Gastrocnemius medialis (tissue), 4 donors: ENCODE measurements at regions of chr18 and their contacts with region 1.

Region 1: DNA sequence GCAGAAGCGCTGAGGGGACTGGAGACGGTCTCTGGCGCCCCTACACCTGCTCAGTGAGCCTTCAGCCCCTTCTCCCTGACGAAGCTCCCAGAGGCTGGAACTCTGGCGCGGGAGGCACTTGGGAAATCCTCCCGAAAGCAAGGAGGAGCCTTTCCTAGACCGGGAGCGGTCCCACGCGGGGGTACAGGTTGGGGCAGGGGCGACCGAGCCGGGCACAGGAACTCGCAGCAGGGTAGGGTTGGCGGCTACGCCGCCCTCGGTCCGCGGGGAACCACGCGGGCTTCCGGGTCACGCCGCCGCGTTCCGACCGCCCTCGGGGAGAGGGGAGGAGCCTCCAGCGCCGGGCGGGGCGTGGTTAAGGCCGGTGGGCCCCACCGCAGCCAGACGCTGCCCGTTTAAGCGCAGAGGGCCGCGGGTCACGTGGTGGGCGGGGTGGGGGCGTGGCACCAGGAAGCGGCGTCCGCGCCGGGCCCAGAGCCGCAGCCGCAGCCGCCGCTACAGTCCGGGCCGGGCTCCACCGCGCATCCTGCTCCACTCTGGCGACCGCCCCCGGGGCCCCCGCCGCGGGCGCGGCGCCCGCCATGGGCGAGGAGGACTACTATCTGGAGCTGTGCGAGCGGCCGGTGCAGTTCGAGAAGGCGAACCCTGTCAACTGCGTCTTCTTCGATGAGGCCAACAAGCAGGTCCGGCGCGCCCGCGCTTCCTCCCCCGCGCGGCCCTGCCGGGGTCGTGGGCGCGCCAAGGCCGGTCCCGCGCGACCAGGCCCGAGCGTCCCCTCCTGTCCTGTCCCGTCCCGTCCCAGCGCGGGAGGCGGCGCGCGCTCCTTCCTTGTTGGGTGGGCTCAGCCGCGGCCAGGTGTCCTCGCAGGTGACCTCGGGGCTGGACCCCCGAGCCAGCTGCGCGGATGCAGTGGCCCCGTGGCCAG is at the start of gene RMC1:
- DNase-seq: peak; percentile 93 to 94
- ATAC-seq: peak; percentile 94
- H3K4me3 ChIP-seq: peak within 1 kb of the TSS; percentile 77 to 89 (median 82)
- H3K27ac ChIP-seq: peak within 1 kb of the TSS; percentile 91 to 94 (median 92)
- H3K4me1 ChIP-seq: peaks cover 16 to 22% of the 10 kb centered on the region in 2 donors
- H3K27me3 ChIP-seq: no peaks in the 10 kb centered on the region
- CTCF ChIP-seq: peak in 3 of 5 experiments; percentile 6 to 38 (median 29)
- POLR2A ChIP-seq: peak; percentile 74 to 81
- total RNA-seq, gene RMC1: 20.1 to 27.3 (median 25.2) TPM

Region 2: DNA sequence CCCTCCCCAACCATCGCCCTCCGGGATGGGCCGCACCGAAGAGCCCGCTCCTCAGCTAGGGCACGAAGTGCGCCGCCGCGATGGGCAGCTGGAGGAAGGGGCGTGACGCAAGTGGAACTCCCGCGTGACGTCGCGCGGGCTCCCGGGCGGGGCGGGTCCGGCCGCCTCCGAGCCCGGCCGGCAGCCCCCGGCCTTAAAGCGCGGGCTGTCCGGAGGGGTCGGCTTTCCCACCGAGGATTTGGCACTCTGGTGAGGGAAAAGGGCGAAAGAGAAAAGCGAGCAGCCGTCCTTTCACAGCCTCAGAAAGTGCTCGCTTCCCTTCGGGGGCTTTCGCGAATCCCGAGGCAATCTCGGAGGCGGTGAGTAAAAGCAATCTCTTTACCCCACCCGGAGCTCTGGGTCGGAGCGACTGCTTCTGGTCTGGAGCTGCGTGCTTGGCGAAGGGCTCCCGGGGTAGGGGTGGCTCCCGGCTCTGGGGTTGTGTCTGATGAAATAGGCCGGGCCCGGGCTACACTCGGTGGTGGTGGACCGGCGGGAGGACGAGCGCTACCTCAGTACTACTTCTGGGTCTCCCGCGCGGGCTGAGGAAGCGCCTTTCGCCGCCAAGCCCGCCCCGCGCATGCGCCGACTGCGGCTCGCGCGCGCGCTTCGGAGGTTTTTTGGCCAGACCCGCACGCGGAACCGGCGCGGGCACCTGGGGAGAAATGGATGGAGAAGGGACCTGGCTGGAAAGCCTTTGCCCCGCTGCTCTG is 569.9 kb before region 1 on chr18 and contains the start of gene RBBP8:
- in situ Hi-C with region 1: no loop called
- intact Hi-C with region 1: loop called (anchors 10 kb)
- DNase-seq: peak; percentile 43 to 46
- ATAC-seq: peak; percentile 82 to 88
- H3K4me3 ChIP-seq: peak within 1 kb of the TSS; percentile 56 to 90 (median 74)
- H3K27ac ChIP-seq: peak within 1 kb of the TSS; percentile 79 to 92 (median 86)
- H3K4me1 ChIP-seq: peaks cover 0 to 11% of the 10 kb centered on the region in 2 donors
- H3K27me3 ChIP-seq: no peaks in the 10 kb centered on the region
- CTCF ChIP-seq: no peak
- POLR2A ChIP-seq: peak; percentile 54 to 72
- total RNA-seq, gene RBBP8: 1.3 to 4.7 (median 1.7) TPM

Region 3: GRCh38 chr18:23243178-23243577 is 260.1 kb before region 1 on chr18:
- in situ Hi-C with region 1: no loop called
- intact Hi-C with region 1: no loop called
- DNase-seq: no peak
- ATAC-seq: no peak
- H3K4me3 ChIP-seq: no peak overlapping the region
- H3K27ac ChIP-seq: no peak overlapping the region
- H3K4me1 ChIP-seq: peaks cover 0 to 7% of the 10 kb centered on the region in 2 donors
- H3K27me3 ChIP-seq: no peaks in the 10 kb centered on the region
- CTCF ChIP-seq: no peak
- POLR2A ChIP-seq: no peak

Region 4: DNA sequence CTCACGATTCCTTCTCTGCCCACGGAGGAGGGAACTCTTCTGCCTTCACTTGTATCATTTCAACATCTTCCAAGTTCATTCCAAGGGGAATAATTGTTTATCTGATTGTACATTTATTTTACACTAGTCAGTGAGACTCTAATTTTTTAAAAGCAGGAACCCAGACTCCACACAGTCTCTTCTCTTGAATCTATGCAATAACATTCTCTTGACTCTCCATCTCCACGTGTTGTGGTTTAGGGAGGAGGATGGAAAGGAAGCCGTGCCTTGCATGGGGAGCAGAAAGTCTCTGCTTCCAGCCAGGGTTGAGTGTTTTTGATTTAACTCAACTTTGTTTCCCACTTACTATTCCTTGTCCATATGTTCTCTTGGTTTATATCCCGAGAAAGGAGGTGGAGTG is 181.3 kb before region 1 on chr18:
- in situ Hi-C with region 1: no loop called
- intact Hi-C with region 1: no loop called
- DNase-seq: no peak
- ATAC-seq: no peak
- H3K4me3 ChIP-seq: no peak overlapping the region
- H3K27ac ChIP-seq: no peak overlapping the region
- H3K4me1 ChIP-seq: no peaks in the 10 kb centered on the region
- H3K27me3 ChIP-seq: no peaks in the 10 kb centered on the region
- CTCF ChIP-seq: no peak
- POLR2A ChIP-seq: no peak

Region 5: DNA sequence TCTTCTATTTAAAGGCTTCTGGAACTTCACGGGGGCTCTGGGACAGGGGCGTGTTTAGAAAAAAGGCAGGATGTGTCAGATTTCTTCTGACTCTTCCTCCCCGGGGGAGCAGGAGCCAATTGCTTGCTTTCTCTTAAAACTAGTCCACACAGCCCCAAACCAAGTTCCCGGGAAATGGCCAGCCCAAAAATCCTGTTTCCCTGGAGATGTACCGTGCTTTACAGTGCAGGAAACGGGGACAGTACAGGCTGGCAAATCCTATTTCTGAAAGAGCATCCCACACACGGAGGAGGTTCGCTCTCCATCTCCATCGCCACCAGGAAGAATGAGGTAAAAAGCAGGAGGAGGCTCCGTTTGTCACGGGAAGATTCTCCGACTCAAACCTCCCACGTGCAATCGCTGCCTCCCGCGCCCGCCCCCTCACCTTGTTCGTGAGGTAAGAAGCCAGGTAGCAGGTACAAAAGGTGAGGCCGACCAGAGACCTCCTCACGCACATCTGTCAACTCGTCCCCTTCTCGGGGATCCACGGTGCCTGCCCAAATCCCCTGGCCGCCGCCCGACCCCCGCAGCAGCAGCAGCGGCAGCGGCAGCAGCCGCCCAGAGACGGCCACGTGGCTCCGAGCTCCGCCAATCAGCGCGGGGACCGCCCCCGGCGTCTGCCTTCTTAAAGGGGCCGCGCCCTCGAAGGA is 65.8 kb before region 1 on chr18:
- in situ Hi-C with region 1: no loop called
- intact Hi-C with region 1: loop called (anchors 1 kb)
- DNase-seq: peak; percentile 44 to 68
- ATAC-seq: peak; percentile 90 to 95
- H3K4me3 ChIP-seq: peak overlapping the region; percentile 86 to 97 (median 93)
- H3K27ac ChIP-seq: peak overlapping the region; percentile 47 to 71 (median 62)
- H3K4me1 ChIP-seq: peaks cover 8 to 15% of the 10 kb centered on the region in 2 donors
- H3K27me3 ChIP-seq: no peaks in the 10 kb centered on the region
- CTCF ChIP-seq: no peak
- POLR2A ChIP-seq: peak in 1 of 2 donors; percentile 10

Region 6: GRCh38 chr18:23586249-23587196 is 83.2 kb after region 1 on chr18 and contains the start of gene NPC1:
- in situ Hi-C with region 1: no loop called
- intact Hi-C with region 1: loop called (anchors 1 kb)
- DNase-seq: peak; percentile 87 to 89
- ATAC-seq: peak; percentile 91 to 93
- H3K4me3 ChIP-seq: peak within 1 kb of the TSS; percentile 77 to 97 (median 90)
- H3K27ac ChIP-seq: peak within 1 kb of the TSS; percentile 95 to 99 (median 97)
- H3K4me1 ChIP-seq: peaks cover 20 to 22% of the 10 kb centered on the region in 2 donors
- H3K27me3 ChIP-seq: no peaks in the 10 kb centered on the region
- CTCF ChIP-seq: peak; percentile 68 to 97 (median 90)
- POLR2A ChIP-seq: peak; percentile 94
- total RNA-seq, gene NPC1: 35.7 to 99.4 (median 46.2) TPM

Region 7: GRCh38 chr18:23828426-23828825 is 325.1 kb after region 1 on chr18:
- in situ Hi-C with region 1: loop called in 1 of 4 experiments (anchors 25 kb)
- intact Hi-C with region 1: loop called (anchors 10 kb)
- DNase-seq: no peak
- ATAC-seq: no peak
- H3K4me3 ChIP-seq: no peak overlapping the region
- H3K27ac ChIP-seq: no peak overlapping the region
- H3K4me1 ChIP-seq: peaks cover 22 to 28% of the 10 kb centered on the region in 2 donors
- H3K27me3 ChIP-seq: no peaks in the 10 kb centered on the region
- CTCF ChIP-seq: no peak
- POLR2A ChIP-seq: no peak